ENCODE measurements at regions of chr15 and their contacts with region 1.

Region 1: DNA sequence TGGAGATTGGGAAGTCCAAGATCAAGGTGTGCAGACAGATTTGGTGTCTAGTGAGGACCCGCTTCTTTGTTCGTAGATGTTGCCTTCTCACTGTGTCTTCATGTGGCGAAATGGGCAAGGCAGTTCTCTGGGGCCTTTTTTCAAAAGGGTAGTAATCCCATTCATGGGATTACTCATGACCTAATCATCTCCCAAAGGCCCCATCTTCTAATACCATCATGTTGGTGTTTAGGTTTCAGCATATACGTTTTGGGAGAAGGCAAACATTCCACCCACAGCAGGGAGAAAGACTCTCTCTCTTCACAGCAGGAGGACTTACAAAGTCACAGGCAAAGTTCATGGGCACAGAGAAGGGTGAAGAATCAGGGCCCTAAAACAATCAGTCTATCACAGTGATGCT is 252.1 kb downstream of the RPLP1 start:
- DNase-seq: no peak
- ATAC-seq: no peak
- H3K4me3 ChIP-seq: no peak overlapping the region
- H3K4me3 Mint-ChIP-seq: no peak overlapping the region
- H3K27ac ChIP-seq: no peak overlapping the region
- H3K27ac Mint-ChIP-seq: no peak overlapping the region
- H3K4me1 ChIP-seq: no peaks in the 10 kb centered on the region
- H3K4me1 Mint-ChIP-seq: no peaks in the 10 kb centered on the region
- H3K27me3 ChIP-seq: no peaks in the 10 kb centered on the region
- H3K27me3 Mint-ChIP-seq: no peaks in the 10 kb centered on the region
- CTCF ChIP-seq: no peak

Region 2: DNA sequence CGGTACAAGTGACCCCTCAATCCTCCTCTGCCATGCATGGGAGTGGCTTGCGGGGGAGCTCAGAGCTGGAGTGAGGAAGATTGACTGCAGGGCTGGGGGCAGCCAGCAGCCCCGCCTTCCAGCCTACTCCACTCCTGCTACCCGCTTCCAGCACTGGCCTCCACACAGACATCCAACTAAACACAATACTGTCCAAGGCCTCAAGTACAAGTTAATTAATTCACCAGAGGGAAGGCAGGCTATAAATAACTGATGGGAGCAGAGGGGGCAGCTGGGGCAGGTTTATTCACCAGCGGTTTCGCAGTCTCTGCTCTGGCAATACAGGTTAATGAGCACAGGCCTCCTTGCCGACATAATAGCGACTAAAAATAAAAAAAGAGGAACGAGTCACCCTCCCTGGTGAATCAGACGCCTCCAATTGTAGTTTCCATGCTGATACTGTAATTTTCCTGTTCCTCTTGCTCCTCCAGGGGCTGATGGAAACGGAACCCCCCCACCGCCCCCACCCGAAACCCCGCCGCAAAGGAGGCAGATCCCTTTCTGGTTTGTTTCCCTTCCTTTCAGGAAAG is 559.4 kb after region 1 on chr15:
- CTCF ChIA-PET with region 1: no interaction called
- POLR2A ChIA-PET with region 1: no interaction called
- intact Hi-C with region 1: loop called in 1 of 2 experiments (anchors 5 kb)
- DNase-seq: peak in 3 of 14 experiments; percentile 27 to 57 (median 46)
- ATAC-seq: no peak
- H3K4me3 ChIP-seq: no peak overlapping the region
- H3K4me3 Mint-ChIP-seq: no peak overlapping the region
- H3K27ac ChIP-seq: no peak overlapping the region
- H3K27ac Mint-ChIP-seq: no peak overlapping the region
- H3K4me1 ChIP-seq: peaks cover 56% of the 10 kb centered on the region
- H3K4me1 Mint-ChIP-seq: peaks cover 41% of the 10 kb centered on the region
- H3K27me3 ChIP-seq: no peaks in the 10 kb centered on the region
- H3K27me3 Mint-ChIP-seq: peaks cover 4% of the 10 kb centered on the region
- CTCF ChIP-seq: no peak